Sciatic nerve (tissue), 2 donors: ENCODE measurements at regions of chr4 and their contacts with region 1.

Region 1: GRCh38 chr4:88284439-88285234 is at the start of gene PPM1K:
- DNase-seq: peak; percentile 100
- ATAC-seq: peak; percentile 99
- total RNA-seq, gene PPM1K: 78.9 TPM

Region 2: DNA sequence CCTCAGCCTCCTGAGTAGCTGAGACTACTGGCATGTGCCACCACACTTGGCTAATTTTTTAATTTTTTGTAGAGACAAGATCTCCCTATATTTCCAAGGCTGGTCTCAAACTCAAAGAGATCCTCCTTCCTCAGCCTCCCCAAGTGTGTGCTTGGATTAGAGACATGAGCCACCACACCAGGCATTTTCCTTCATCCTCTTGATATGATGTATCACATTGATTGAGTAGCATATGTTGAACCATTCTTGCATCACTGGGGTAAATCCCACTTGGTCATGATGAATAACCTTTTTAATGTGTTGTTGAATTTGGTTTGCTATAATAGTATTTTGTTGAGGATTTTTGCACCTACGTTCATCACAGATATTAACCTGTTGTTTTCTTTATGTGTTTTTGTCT is 23.9 kb after region 1 on chr4:
- intact Hi-C with region 1: no loop called
- DNase-seq: no peak
- ATAC-seq: no peak

Region 3: GRCh38 chr4:88378691-88379559 is 94.3 kb after region 1 on chr4 and contains the start of gene HERC6:
- intact Hi-C with region 1: loop called (anchors 10 kb)
- DNase-seq: peak; percentile 82
- ATAC-seq: peak; percentile 96
- total RNA-seq, gene HERC6: 9.5 TPM